WTC11 (cell line): ENCODE measurements at regions of chr7 and their contacts with region 1.

Region 1: GRCh38 chr7:39746103-39746819 is 122.9 kb downstream of the RALA start:
- DNase-seq: peak; percentile 85
- ATAC-seq: peak; percentile 63
- H3K4me3 Mint-ChIP-seq: no peak overlapping the region
- H3K27ac Mint-ChIP-seq: no peak overlapping the region; the same call in 1 of the 2 replicates
- H3K4me1 Mint-ChIP-seq: peaks cover 42% of the 10 kb centered on the region
- H3K27me3 Mint-ChIP-seq: no peaks in the 10 kb centered on the region
- CTCF ChIP-seq: peak; percentile 31; the same call in 1 of the 2 replicates

Region 2: DNA sequence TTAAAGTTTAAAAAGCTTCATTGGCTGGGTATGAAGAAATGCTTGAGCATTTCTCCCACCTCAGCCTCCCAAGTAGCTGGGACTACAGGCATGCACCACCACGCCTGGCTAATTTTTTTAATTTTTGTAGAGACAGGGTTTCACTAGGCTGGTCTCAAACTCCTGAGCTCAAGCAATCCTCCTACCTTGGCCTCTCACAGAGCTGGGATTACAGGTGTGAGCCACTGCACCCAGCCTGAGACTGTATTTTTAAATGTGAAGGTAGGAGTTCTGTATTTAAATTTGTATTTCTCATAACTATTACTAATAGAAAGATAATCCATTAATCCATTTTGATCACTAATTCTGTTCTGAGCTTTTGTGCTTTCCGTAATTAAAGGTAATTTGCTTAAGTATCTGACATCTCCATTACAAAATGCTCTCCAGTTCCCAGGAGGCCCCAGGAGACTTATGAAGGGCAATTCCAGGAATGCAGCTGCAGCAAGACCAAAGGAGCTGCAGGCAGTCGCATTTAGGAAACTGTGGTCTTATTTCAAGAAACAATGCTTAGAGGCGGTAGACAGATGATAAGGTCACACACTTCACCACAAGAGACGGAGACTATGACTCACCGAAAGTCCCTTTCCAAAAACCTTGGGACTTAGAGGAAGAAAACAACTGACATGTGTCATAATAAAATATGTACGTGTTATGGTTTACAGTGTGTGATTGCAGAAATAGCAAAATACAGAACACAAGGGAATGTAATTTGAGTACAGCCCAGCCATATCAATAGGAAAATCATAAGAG is 156.7 kb before region 1 on chr7:
- CTCF ChIA-PET with region 1: interaction called, 13 read pairs
- POLR2A ChIA-PET with region 1: no interaction called
- DNase-seq: peak; percentile 33
- ATAC-seq: peak; percentile 97
- H3K4me3 Mint-ChIP-seq: no peak overlapping the region
- H3K27ac Mint-ChIP-seq: peak overlapping the region; percentile 65
- H3K4me1 Mint-ChIP-seq: peaks cover 12% of the 10 kb centered on the region
- H3K27me3 Mint-ChIP-seq: no peaks in the 10 kb centered on the region; the same call in 1 of the 2 replicates
- CTCF ChIP-seq: no peak

Region 3: DNA sequence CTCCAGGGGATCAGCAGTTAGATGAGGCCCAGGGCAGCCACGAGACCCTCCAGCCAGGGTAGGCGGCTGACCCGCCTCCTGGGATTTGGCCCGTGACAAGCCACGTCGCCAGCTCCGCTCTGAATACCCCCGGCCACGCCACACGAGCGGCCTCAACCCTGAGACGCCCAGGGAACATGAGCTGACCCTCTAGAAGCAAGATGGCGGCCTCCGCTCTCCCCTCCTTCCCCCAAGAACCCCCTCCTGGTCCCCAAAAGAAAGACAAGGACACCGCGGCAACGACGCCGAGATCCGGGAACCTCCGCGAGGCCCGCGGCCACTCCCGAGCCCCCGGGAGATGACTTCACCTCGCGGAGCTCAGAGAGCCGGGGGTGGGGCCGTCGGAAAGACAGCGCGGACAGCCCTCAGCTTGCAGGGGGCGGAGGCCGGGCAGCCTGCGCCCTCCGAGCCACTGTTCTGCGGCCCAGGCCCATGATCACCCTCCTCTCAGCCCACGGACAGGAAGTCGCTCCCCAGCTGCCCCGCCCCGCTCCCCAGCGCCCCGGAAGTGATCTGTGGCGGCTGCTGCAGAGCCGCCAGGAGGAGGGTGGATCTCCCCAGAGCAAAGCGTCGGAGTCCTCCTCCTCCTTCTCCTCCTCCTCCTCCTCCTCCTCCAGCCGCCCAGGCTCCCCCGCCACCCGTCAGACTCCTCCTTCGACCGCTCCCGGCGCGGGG is 123.1 kb before region 1 on chr7 and contains the start of gene RALA:
- CTCF ChIA-PET with region 1: interaction called, 31 read pairs
- POLR2A ChIA-PET with region 1: interaction called, 5 read pairs
- DNase-seq: peak; percentile 92
- ATAC-seq: peak; percentile 96
- H3K4me3 Mint-ChIP-seq: peak within 1 kb of the TSS; percentile 91
- H3K27ac Mint-ChIP-seq: peak within 1 kb of the TSS; percentile 91
- H3K4me1 Mint-ChIP-seq: peaks cover 50% of the 10 kb centered on the region
- H3K27me3 Mint-ChIP-seq: no peaks in the 10 kb centered on the region
- CTCF ChIP-seq: no peak
- total RNA-seq, gene RALA: 57.3 to 59.8 TPM (median 59.3 TPM) in 3 replicates

Region 4: DNA sequence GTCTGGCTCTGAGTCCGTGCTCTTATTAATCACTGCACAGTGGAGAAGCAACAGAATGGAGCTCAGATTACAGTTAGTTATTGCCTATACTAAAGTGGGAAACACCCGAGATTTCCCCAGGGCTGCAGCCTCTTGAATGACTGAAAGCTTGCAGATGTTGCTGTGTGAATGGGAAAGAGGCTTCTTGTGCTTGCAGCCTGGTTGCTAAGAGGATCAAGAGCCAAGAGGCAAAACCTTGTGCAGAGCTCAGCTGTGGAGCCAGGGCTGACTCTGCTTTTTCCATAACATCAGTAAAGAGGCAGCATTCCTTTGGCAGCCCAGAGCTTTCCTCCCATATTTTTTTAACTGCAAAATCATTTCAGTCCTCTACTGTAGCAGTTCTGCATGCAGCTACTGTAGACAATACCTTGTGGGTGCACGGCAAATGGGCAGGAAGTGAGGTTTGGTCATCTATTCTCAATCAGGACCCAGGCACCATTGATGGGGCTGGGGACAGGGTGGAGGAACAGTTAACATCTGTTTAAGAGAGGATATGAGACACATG is 36.4 kb before region 1 on chr7:
- CTCF ChIA-PET with region 1: interaction called, 24 read pairs
- POLR2A ChIA-PET with region 1: no interaction called
- DNase-seq: no peak
- ATAC-seq: peak; percentile 44
- H3K4me3 Mint-ChIP-seq: no peak overlapping the region
- H3K27ac Mint-ChIP-seq: peak overlapping the region; percentile 14; the same call in 1 of the 2 replicates
- H3K4me1 Mint-ChIP-seq: peaks cover 7% of the 10 kb centered on the region
- H3K27me3 Mint-ChIP-seq: peaks cover 6% of the 10 kb centered on the region
- CTCF ChIP-seq: no peak

Region 5: GRCh38 chr7:39720574-39720973 is 25.7 kb before region 1 on chr7:
- CTCF ChIA-PET with region 1: interaction called, 11 read pairs
- POLR2A ChIA-PET with region 1: no interaction called
- DNase-seq: no peak
- ATAC-seq: peak; percentile 58
- H3K4me3 Mint-ChIP-seq: no peak overlapping the region
- H3K27ac Mint-ChIP-seq: peak overlapping the region; percentile 59; the same call in 1 of the 2 replicates
- H3K4me1 Mint-ChIP-seq: peaks cover 53% of the 10 kb centered on the region
- H3K27me3 Mint-ChIP-seq: peaks cover 3% of the 10 kb centered on the region
- CTCF ChIP-seq: no peak

Region 6: GRCh38 chr7:39732837-39733804 is 13.1 kb before region 1 on chr7:
- CTCF ChIA-PET with region 1: interaction called, 35 read pairs
- POLR2A ChIA-PET with region 1: interaction called, 5 read pairs
- DNase-seq: peak; percentile 97
- ATAC-seq: peak; percentile 92
- H3K4me3 Mint-ChIP-seq: peak overlapping the region; percentile 69
- H3K27ac Mint-ChIP-seq: peak overlapping the region; percentile 95
- H3K4me1 Mint-ChIP-seq: peaks cover 30% of the 10 kb centered on the region
- H3K27me3 Mint-ChIP-seq: peaks cover 23% of the 10 kb centered on the region
- CTCF ChIP-seq: no peak

Region 7: DNA sequence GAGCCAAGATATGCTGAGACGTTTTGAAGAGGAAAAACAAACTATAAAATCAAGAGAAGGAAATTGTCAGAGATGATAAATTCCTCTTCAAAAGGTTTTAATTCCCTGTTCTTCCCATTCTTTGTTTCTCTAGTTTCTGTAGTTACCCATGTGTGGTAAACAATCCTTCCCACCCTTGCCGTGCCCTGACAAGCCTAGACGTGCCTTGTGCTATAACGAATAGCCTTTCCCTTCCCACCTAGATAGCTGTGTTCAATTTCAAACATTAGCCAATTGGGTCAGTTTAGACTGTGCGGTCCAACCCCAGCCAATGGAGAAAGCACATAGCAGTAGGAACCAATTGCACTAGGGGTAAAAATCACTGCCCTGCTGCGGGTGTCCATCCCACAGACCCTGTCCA is 15.2 kb after region 1 on chr7:
- CTCF ChIA-PET with region 1: interaction called, 12 read pairs
- POLR2A ChIA-PET with region 1: interaction called, 4 read pairs
- DNase-seq: no peak
- ATAC-seq: no peak
- H3K4me3 Mint-ChIP-seq: no peak overlapping the region
- H3K27ac Mint-ChIP-seq: no peak overlapping the region; the same call in 1 of the 2 replicates
- H3K4me1 Mint-ChIP-seq: peaks cover 40% of the 10 kb centered on the region
- H3K27me3 Mint-ChIP-seq: peaks cover 15% of the 10 kb centered on the region
- CTCF ChIP-seq: no peak